Endothelial cell of umbilical vein (primary cell): ENCODE measurements at regions of chr6 and their contacts with region 1.

Region 1: GRCh38 chr6:127516666-127517273 is 2.4 kb downstream of the MTCL3 start:
- DNase-seq: peak; percentile 45
- H3K4me3 ChIP-seq: no peak overlapping the region
- H3K27ac ChIP-seq: no peak overlapping the region
- H3K4me1 ChIP-seq: peaks cover 15% of the 10 kb centered on the region
- H3K27me3 ChIP-seq: peaks cover 34 to 74% of the 10 kb centered on the region in 2 experiments
- CTCF ChIP-seq: peak; percentile 67 to 75
- POLR2A ChIP-seq: no peak

Region 2: DNA sequence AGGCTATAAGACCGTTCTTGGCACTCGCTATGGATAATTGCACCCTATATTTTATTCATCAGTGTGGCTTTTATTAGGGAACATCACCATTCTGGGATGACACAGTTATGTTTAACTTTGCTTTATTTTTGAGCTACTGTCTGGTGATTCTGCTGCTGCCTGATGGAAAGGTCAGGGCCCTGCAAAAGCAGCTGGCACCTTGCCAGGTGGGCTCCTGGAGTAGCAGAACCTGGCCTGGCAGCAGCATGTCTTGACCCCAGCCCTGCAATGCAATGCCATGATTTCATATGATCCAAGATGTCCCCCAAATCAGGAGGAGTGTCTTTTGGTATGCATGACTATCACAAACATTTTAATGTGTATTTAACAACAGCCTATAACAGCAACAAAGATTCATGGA is 626.7 kb before region 1 on chr6:
- CTCF ChIA-PET with region 1: no interaction called
- POLR2A ChIA-PET with region 1: no interaction called
- dilution Hi-C with region 1: no loop called
- intact Hi-C with region 1: no loop called
- DNase-seq: peak; percentile 14
- H3K4me3 ChIP-seq: no peak overlapping the region
- H3K27ac ChIP-seq: peak overlapping the region; percentile 76
- H3K4me1 ChIP-seq: peaks cover 37% of the 10 kb centered on the region
- H3K27me3 ChIP-seq: no peaks in the 10 kb centered on the region
- CTCF ChIP-seq: no peak
- POLR2A ChIP-seq: no peak

Region 3: DNA sequence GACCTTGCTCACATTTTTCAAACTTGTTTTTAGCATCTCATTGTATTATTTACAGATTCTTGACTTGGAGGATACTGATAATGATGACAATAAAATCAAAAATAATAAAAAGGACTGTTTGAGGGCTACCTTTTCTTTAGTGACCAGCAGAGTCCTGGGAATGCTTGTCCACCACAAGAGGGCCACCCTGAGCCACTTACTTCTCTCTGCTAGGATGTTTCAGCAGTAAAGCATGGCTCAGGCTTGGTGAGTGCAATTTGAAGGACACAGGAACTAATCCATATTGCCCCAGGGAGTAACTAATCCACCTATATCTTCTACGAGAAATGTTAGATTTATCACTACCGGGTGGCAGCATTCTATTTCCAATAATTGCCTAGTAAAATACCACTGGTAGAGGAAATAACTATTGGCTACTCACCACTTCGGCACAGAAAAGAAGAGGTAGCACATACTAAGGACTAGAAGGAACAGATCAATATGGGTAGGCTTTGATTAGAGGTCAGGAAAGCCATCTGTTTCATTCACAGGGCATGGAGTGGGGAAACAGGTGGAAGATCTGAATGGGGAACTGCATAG is 51.8 kb before region 1 on chr6:
- CTCF ChIA-PET with region 1: interaction called, 21 read pairs
- POLR2A ChIA-PET with region 1: no interaction called
- dilution Hi-C with region 1: no loop called
- intact Hi-C with region 1: no loop called
- DNase-seq: peak; percentile 59
- H3K4me3 ChIP-seq: no peak overlapping the region
- H3K27ac ChIP-seq: no peak overlapping the region
- H3K4me1 ChIP-seq: no peaks in the 10 kb centered on the region
- H3K27me3 ChIP-seq: peaks cover 3 to 6% of the 10 kb centered on the region in 2 experiments
- CTCF ChIP-seq: peak; percentile 87 to 91
- POLR2A ChIP-seq: no peak

Region 4: DNA sequence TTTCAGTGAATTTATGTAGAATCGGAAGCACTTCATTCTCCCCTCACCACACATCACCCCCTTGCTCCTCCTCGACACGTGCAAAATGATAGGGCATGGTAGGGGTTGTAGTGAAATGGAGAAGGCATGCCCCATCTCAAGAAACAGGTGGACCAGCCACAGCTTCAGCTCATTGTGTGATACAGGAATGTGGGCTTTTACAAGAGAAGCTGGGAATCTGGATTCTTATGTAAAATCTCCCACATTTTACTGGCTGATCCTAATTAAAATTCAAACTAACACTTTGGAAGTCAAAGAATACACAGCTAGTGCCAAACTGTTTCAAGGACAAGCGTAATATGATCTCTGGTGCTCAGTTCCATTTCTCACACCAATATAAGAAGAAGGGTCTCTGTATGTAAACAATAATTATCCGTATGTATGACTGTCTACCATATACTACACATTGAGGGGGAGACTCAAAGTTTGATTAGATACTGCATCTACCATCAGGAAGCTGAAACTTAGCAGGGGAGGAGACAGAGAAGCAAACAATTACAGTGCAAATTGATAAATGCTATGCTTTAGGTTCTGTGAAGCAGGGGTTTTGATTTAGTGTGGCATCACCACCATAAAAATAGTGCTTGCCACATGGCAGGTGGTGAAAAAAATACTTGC is 33.2 kb before region 1 on chr6:
- CTCF ChIA-PET with region 1: interaction called, 15 read pairs
- POLR2A ChIA-PET with region 1: no interaction called
- dilution Hi-C with region 1: no loop called
- intact Hi-C with region 1: no loop called
- DNase-seq: no peak
- H3K4me3 ChIP-seq: no peak overlapping the region
- H3K27ac ChIP-seq: no peak overlapping the region
- H3K4me1 ChIP-seq: peaks cover 4% of the 10 kb centered on the region
- H3K27me3 ChIP-seq: peaks cover 8 to 17% of the 10 kb centered on the region in 2 experiments
- CTCF ChIP-seq: no peak
- POLR2A ChIP-seq: no peak

Region 5: GRCh38 chr6:127496471-127496870 is 20.3 kb before region 1 on chr6:
- CTCF ChIA-PET with region 1: interaction called, 13 read pairs
- POLR2A ChIA-PET with region 1: no interaction called
- dilution Hi-C with region 1: no loop called
- intact Hi-C with region 1: no loop called
- DNase-seq: no peak
- H3K4me3 ChIP-seq: no peak overlapping the region
- H3K27ac ChIP-seq: no peak overlapping the region
- H3K4me1 ChIP-seq: no peaks in the 10 kb centered on the region
- H3K27me3 ChIP-seq: peaks cover 5 to 13% of the 10 kb centered on the region in 2 experiments
- CTCF ChIP-seq: no peak
- POLR2A ChIP-seq: no peak

Region 6: DNA sequence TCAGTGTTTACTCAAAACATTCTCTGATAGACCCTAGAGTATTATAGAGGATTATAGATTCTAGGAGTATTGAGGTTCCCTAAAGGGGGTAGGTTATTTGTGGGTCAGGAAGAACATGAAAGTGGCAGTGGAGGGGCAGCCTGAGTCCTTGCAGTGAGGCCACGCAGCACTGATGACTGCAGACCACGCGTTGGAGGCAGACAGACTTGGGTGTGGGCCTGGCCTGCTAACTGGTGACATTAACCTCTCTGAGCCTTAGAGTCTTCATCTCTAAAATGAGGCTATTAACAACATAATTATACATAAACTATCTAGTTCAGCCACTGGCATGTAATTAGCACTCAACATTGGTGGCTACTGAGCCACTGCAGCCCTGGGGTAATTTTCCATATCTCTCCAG is 13.7 kb before region 1 on chr6:
- CTCF ChIA-PET with region 1: interaction called, 14 read pairs
- POLR2A ChIA-PET with region 1: no interaction called
- dilution Hi-C with region 1: no loop called
- intact Hi-C with region 1: no loop called
- DNase-seq: no peak
- H3K4me3 ChIP-seq: no peak overlapping the region
- H3K27ac ChIP-seq: no peak overlapping the region
- H3K4me1 ChIP-seq: no peaks in the 10 kb centered on the region
- H3K27me3 ChIP-seq: peaks cover 5 to 10% of the 10 kb centered on the region in 2 experiments
- CTCF ChIP-seq: no peak
- POLR2A ChIP-seq: no peak

Region 7: GRCh38 chr6:127533011-127533410 is 16.2 kb after region 1 on chr6:
- CTCF ChIA-PET with region 1: interaction called, 19 read pairs
- POLR2A ChIA-PET with region 1: no interaction called
- dilution Hi-C with region 1: no loop called
- intact Hi-C with region 1: no loop called
- DNase-seq: no peak
- H3K4me3 ChIP-seq: no peak overlapping the region
- H3K27ac ChIP-seq: no peak overlapping the region
- H3K4me1 ChIP-seq: no peaks in the 10 kb centered on the region
- H3K27me3 ChIP-seq: peaks cover 9 to 27% of the 10 kb centered on the region in 2 experiments
- CTCF ChIP-seq: no peak
- POLR2A ChIP-seq: no peak

Region 8: DNA sequence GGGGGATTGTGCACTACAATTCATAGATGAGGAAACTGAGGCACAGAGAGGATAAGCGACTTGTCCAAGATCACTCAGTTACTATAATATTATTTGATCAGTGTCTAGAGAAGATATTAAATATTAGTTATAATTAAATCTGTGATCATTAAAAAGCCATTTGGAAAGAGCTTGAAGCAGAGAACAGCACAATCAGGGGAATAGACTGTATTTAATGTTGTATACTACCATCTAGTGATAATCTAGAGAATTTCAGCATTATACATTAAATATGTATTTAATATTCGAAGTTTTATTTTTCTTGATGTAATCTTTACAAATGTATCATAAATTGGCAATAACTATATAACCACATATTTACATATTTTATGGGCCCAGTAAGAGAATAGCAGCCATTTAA is 22.5 kb after region 1 on chr6:
- CTCF ChIA-PET with region 1: interaction called, 19 read pairs
- POLR2A ChIA-PET with region 1: no interaction called
- dilution Hi-C with region 1: no loop called
- intact Hi-C with region 1: no loop called
- DNase-seq: peak; percentile 26
- H3K4me3 ChIP-seq: no peak overlapping the region
- H3K27ac ChIP-seq: no peak overlapping the region
- H3K4me1 ChIP-seq: no peaks in the 10 kb centered on the region
- H3K27me3 ChIP-seq: peaks cover 12 to 17% of the 10 kb centered on the region in 2 experiments
- CTCF ChIP-seq: peak in 1 of 2 donors; percentile 3
- POLR2A ChIP-seq: no peak